ENCODE measurements at regions of chr18 and their contacts with region 1.

Region 1: GRCh38 chr18:28439870-28440269 is 262.9 kb upstream of the CDH2 start:
- H3K4me3 Mint-ChIP-seq: no peak overlapping the region
- H3K27ac Mint-ChIP-seq: no peak overlapping the region
- H3K4me1 Mint-ChIP-seq: no peaks in the 10 kb centered on the region
- H3K27me3 Mint-ChIP-seq: no peaks in the 10 kb centered on the region

Region 2: DNA sequence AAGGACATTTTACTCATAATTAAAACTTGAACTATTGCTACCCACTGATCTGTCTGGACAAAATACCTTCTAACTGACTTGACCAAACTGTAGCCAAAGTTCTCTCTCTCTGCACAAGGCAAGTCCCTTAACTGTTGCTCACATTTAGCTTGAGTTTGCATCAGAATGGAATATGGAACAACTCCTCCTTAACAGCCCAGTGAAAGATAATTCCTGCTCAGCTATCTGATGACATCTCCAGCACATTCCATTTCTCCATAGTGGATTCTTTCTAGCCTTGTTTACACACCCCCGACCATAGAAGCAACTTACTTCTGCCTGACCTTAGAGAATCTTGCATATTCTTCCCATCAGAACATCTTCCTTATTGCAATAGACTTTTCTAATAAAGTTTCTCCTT is 54.3 kb after region 1 on chr18:
- intact Hi-C with region 1: loop called (anchors 10 kb)
- H3K4me3 Mint-ChIP-seq: no peak overlapping the region
- H3K27ac Mint-ChIP-seq: no peak overlapping the region
- H3K4me1 Mint-ChIP-seq: no peaks in the 10 kb centered on the region
- H3K27me3 Mint-ChIP-seq: no peaks in the 10 kb centered on the region

Region 3: DNA sequence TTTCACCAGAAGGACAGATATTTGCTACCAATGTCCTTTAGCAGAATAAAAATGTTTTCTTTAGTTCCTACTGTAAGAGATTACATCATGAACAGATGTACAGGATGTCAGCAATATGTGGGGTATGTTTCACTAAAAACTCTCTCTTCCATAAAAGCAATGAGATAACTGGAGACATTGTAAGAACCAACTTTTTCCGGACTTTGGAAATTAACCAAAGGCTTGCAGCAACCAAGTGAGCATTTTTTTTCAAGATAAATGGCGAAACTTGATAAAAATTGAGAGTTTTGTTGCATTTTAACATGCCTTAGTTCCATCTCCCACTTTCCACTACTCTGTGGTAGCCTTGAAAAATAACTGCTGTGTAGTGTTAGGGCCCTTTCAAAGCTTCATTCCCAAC is 166.8 kb after region 1 on chr18:
- intact Hi-C with region 1: no loop called
- H3K4me3 Mint-ChIP-seq: no peak overlapping the region
- H3K27ac Mint-ChIP-seq: no peak overlapping the region
- H3K4me1 Mint-ChIP-seq: no peaks in the 10 kb centered on the region
- H3K27me3 Mint-ChIP-seq: no peaks in the 10 kb centered on the region

Measured in dendritic cell treated with granulocyte-macrophage colony-stimulating factor and Interleukin-4, amounts not matched to agents 40 ng/mL and 50 ng/mL, for 4 days (primary cell).